ENCODE measurements at regions of chr1 and their contacts with region 1.

Region 1: DNA sequence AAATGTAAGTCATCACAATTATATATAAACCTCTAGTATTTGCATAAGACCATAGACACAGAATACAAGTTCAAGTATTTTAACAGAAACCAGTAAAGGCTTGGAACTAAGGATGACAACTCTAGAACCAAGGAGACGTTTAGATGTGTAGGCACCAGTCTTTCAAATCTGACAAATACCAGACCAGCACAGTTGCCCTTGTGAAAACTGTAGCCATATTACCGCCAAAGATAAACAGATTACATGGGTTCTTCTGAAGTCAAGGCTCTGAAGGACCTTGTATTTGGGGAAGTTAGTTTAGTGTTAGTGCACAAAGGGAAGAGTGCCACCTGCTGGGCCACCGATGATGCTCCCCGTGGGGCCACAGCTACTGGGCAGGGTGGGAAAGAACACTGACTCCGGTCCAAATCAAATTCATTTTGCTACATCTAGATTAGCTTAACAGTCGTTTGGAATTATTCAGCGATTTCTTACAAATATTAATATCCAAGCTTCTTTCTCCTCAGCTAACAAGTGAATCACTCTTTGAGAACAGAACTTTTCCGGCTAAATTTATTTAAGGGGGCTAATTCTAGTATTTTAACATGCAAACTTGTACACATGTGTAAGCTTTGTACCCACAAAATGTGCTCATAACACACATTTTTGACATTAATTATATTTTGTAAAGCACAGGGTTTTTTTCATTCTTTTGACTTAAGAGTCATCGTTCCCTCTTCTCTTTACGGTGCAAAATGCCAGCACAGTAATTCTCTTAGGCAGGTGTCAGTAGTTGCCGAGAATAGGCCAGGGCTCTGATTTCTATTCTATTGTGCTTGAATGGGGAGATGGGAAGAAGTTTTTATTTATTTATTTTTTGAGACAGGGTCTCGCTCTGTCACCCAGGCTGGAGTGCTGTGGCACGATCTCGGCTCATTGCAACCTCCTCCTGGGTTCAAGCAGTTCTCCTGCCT is 8.0 kb upstream of the NIBAN1 start:
- DNase-seq: no peak
- ATAC-seq: peak; percentile 100
- H3K4me3 ChIP-seq: no peak overlapping the region
- H3K27ac ChIP-seq: no peak overlapping the region
- H3K4me1 ChIP-seq: no peaks in the 10 kb centered on the region
- H3K27me3 ChIP-seq: no peaks in the 10 kb centered on the region
- CTCF ChIP-seq: peak; percentile 86 to 95 (median 91)
- EP300 ChIP-seq: no peak
- POLR2A ChIP-seq: no peak
- RAD21 ChIP-seq: peak; percentile 97

Region 2: GRCh38 chr1:184075055-184076029 is 906.9 kb before region 1 on chr1:
- CTCF ChIA-PET with region 1: no interaction called
- POLR2A ChIA-PET with region 1: no interaction called
- RAD21 ChIA-PET with region 1: no interaction called
- SMC1A ChIA-PET with region 1: no interaction called
- in situ Hi-C with region 1: no loop called
- intact Hi-C with region 1: loop called (anchors 5 kb)
- DNase-seq: no peak
- ATAC-seq: peak; percentile 91
- H3K4me3 ChIP-seq: no peak overlapping the region
- H3K27ac ChIP-seq: no peak overlapping the region
- H3K4me1 ChIP-seq: no peaks in the 10 kb centered on the region
- H3K27me3 ChIP-seq: no peaks in the 10 kb centered on the region
- CTCF ChIP-seq: peak; percentile 52 to 74 (median 62)
- EP300 ChIP-seq: 0 out of 4 replicates have a peak, but pooled peaks of 1 of the 2 experiments have one; percentile 12
- POLR2A ChIP-seq: no peak
- RAD21 ChIP-seq: peak; percentile 96

Region 3: GRCh38 chr1:184724843-184725242 is 257.4 kb before region 1 on chr1:
- CTCF ChIA-PET with region 1: no interaction called
- POLR2A ChIA-PET with region 1: no interaction called
- RAD21 ChIA-PET with region 1: no interaction called
- SMC1A ChIA-PET with region 1: no interaction called
- in situ Hi-C with region 1: no loop called
- intact Hi-C with region 1: loop called (anchors 5 kb)
- DNase-seq: no peak
- ATAC-seq: no peak
- H3K4me3 ChIP-seq: no peak overlapping the region
- H3K27ac ChIP-seq: no peak overlapping the region
- H3K4me1 ChIP-seq: no peaks in the 10 kb centered on the region
- H3K27me3 ChIP-seq: no peaks in the 10 kb centered on the region
- CTCF ChIP-seq: no peak
- EP300 ChIP-seq: no peak
- POLR2A ChIP-seq: no peak
- RAD21 ChIP-seq: no peak

Region 4: GRCh38 chr1:184813528-184814089 is 168.7 kb before region 1 on chr1:
- CTCF ChIA-PET with region 1: interaction called, 353 read pairs
- POLR2A ChIA-PET with region 1: no interaction called
- RAD21 ChIA-PET with region 1: interaction called, 152 read pairs
- SMC1A ChIA-PET with region 1: interaction called, 219 read pairs
- in situ Hi-C with region 1: loop called (anchors 5 kb)
- intact Hi-C with region 1: no loop called
- DNase-seq: no peak
- ATAC-seq: no peak
- H3K4me3 ChIP-seq: no peak overlapping the region
- H3K27ac ChIP-seq: no peak overlapping the region
- H3K4me1 ChIP-seq: no peaks in the 10 kb centered on the region
- H3K27me3 ChIP-seq: no peaks in the 10 kb centered on the region
- CTCF ChIP-seq: no peak
- EP300 ChIP-seq: no peak
- POLR2A ChIP-seq: no peak
- RAD21 ChIP-seq: no peak

Region 5: GRCh38 chr1:184825571-184825970 is 156.7 kb before region 1 on chr1:
- CTCF ChIA-PET with region 1: interaction called, 10 read pairs
- POLR2A ChIA-PET with region 1: no interaction called
- RAD21 ChIA-PET with region 1: interaction called, 5 read pairs
- SMC1A ChIA-PET with region 1: interaction called, 5 read pairs
- in situ Hi-C with region 1: no loop called
- intact Hi-C with region 1: no loop called
- DNase-seq: no peak
- ATAC-seq: peak; percentile 68
- H3K4me3 ChIP-seq: no peak overlapping the region
- H3K27ac ChIP-seq: peak overlapping the region; percentile 60
- H3K4me1 ChIP-seq: peaks cover 20% of the 10 kb centered on the region
- H3K27me3 ChIP-seq: no peaks in the 10 kb centered on the region
- CTCF ChIP-seq: no peak
- EP300 ChIP-seq: no peak
- POLR2A ChIP-seq: no peak
- RAD21 ChIP-seq: no peak

Region 6: DNA sequence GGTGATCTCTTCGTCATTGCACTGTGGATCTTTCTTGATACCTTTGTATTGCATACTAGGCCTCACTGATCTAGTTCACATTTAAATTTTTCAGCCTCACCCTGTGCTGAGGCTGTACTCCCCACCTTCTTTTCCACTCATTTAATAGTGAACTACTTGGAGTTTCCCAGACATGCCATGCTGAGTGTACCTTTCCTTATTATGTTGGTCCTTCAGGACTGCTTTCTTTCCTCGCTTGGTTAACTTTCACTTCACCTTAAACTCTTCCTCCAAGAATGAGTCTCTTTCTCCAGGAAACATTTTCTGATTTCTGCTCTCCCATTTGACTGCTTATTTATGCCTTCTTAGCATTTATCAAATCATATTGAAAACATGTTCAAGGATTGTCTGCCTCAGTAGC is 83.9 kb after region 1 on chr1:
- CTCF ChIA-PET with region 1: no interaction called
- POLR2A ChIA-PET with region 1: no interaction called
- RAD21 ChIA-PET with region 1: no interaction called
- SMC1A ChIA-PET with region 1: no interaction called
- in situ Hi-C with region 1: no loop called
- intact Hi-C with region 1: no loop called
- DNase-seq: no peak
- ATAC-seq: no peak
- H3K4me3 ChIP-seq: no peak overlapping the region
- H3K27ac ChIP-seq: no peak overlapping the region
- H3K4me1 ChIP-seq: no peaks in the 10 kb centered on the region
- H3K27me3 ChIP-seq: no peaks in the 10 kb centered on the region
- CTCF ChIP-seq: no peak
- EP300 ChIP-seq: no peak
- POLR2A ChIP-seq: no peak
- RAD21 ChIP-seq: no peak

Region 7: DNA sequence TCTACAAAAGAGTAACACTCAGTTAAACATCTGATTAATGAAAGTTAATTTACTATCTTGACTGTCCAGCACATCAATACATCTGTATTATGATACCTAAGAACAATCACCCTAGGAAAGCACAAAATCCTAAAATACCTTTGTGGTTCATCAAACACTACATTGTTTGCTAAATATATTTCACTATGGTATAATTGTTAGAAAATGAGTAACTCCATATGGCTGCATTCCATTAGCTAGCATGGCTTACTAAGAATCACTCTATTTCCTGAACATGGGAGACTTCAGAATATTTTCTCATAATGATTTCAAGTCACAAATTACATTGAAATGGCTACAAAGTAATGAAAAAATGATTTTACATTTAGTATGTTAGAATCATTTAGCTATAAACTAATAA is 162.0 kb after region 1 on chr1:
- CTCF ChIA-PET with region 1: no interaction called
- POLR2A ChIA-PET with region 1: no interaction called
- RAD21 ChIA-PET with region 1: no interaction called
- SMC1A ChIA-PET with region 1: no interaction called
- in situ Hi-C with region 1: no loop called
- intact Hi-C with region 1: no loop called
- DNase-seq: no peak
- ATAC-seq: no peak
- H3K4me3 ChIP-seq: no peak overlapping the region
- H3K27ac ChIP-seq: no peak overlapping the region
- H3K4me1 ChIP-seq: no peaks in the 10 kb centered on the region
- H3K27me3 ChIP-seq: no peaks in the 10 kb centered on the region
- CTCF ChIP-seq: no peak
- EP300 ChIP-seq: no peak
- POLR2A ChIP-seq: no peak
- RAD21 ChIP-seq: no peak

Region 8: GRCh38 chr1:185681034-185681633 is 698.9 kb after region 1 on chr1:
- CTCF ChIA-PET with region 1: interaction called, 6 read pairs
- POLR2A ChIA-PET with region 1: no interaction called
- RAD21 ChIA-PET with region 1: no interaction called
- SMC1A ChIA-PET with region 1: interaction called, 6 read pairs
- in situ Hi-C with region 1: no loop called
- intact Hi-C with region 1: loop called (anchors 10 kb)
- DNase-seq: peak; percentile 21
- ATAC-seq: peak; percentile 89
- H3K4me3 ChIP-seq: no peak overlapping the region
- H3K27ac ChIP-seq: no peak overlapping the region
- H3K4me1 ChIP-seq: no peaks in the 10 kb centered on the region
- H3K27me3 ChIP-seq: no peaks in the 10 kb centered on the region
- CTCF ChIP-seq: peak; percentile 43 to 65 (median 49); a peak in 4 of 6 replicates
- EP300 ChIP-seq: no peak
- POLR2A ChIP-seq: no peak
- RAD21 ChIP-seq: peak; percentile 74